ENCODE measurements at regions of chr7 and their contacts with region 1.

Region 1: GRCh38 chr7:135274495-135275268 is 41.0 kb downstream of the STRA8 start:
- DNase-seq: peak; percentile 56 to 80
- ATAC-seq: peak; percentile 79 to 94
- H3K4me3 ChIP-seq: no peak overlapping the region
- H3K27ac ChIP-seq: no peak overlapping the region
- H3K4me1 ChIP-seq: no peaks in the 10 kb centered on the region
- CTCF ChIP-seq: peak; percentile 83
- EP300 ChIP-seq: no peak
- POLR2A ChIP-seq: no peak
- RAD21 ChIP-seq: peak; percentile 86 to 89

Region 2: DNA sequence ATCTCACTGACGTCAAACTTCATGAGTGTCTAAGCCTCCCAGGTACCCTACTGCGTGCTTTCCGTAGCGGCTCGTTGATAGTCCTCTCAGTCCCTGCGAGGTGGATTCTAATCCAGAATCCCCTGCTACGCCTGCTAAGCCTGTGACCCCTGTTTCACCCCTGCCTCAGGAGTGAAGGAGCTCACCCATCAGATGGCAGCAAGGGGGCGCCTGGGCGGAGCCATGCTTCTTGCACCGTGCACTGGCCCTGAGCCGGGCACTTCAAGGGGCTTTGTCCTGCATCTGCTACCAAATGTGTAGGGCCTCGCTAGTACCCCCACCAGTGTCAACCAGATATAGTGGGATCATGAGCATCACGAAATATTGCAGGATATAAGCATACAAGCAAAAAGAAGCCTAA is 42.0 kb before region 1 on chr7:
- CTCF ChIA-PET with region 1: interaction called, 12 read pairs
- POLR2A ChIA-PET with region 1: no interaction called
- DNase-seq: peak in 1 of 2 experiments; percentile 42
- ATAC-seq: peak in 1 of 2 experiments; percentile 83; a peak in 3 of 6 replicates
- H3K4me3 ChIP-seq: no peak overlapping the region
- H3K27ac ChIP-seq: no peak overlapping the region
- H3K4me1 ChIP-seq: no peaks in the 10 kb centered on the region
- CTCF ChIP-seq: peak; percentile 40
- EP300 ChIP-seq: no peak
- POLR2A ChIP-seq: no peak
- RAD21 ChIP-seq: no peak

Region 3: GRCh38 chr7:135260930-135261721 is 13.6 kb before region 1 on chr7:
- CTCF ChIA-PET with region 1: interaction called, 69 read pairs
- POLR2A ChIA-PET with region 1: no interaction called
- DNase-seq: no peak
- ATAC-seq: no peak; a peak in 1 of 6 replicates
- H3K4me3 ChIP-seq: no peak overlapping the region
- H3K27ac ChIP-seq: no peak overlapping the region
- H3K4me1 ChIP-seq: peaks cover 12% of the 10 kb centered on the region; the same call in 1 of the 3 replicates
- CTCF ChIP-seq: no peak
- EP300 ChIP-seq: no peak
- POLR2A ChIP-seq: no peak
- RAD21 ChIP-seq: no peak

Region 4: GRCh38 chr7:135320277-135320676 is 45.6 kb after region 1 on chr7:
- CTCF ChIA-PET with region 1: interaction called, 35 read pairs
- POLR2A ChIA-PET with region 1: no interaction called
- DNase-seq: peak in 1 of 2 experiments; percentile 44
- ATAC-seq: peak; percentile 53 to 78; a peak in 4 of 6 replicates
- H3K4me3 ChIP-seq: no peak overlapping the region
- H3K27ac ChIP-seq: peak overlapping the region; percentile 40 to 44; a peak in 3 of 6 replicates
- H3K4me1 ChIP-seq: peaks cover 8% of the 10 kb centered on the region
- CTCF ChIP-seq: no peak
- EP300 ChIP-seq: no peak
- POLR2A ChIP-seq: no peak
- RAD21 ChIP-seq: no peak

Region 5: GRCh38 chr7:135348493-135348892 is 73.8 kb after region 1 on chr7:
- CTCF ChIA-PET with region 1: interaction called, 388 read pairs
- POLR2A ChIA-PET with region 1: no interaction called
- DNase-seq: no peak
- ATAC-seq: no peak
- H3K4me3 ChIP-seq: no peak overlapping the region
- H3K27ac ChIP-seq: no peak overlapping the region
- H3K4me1 ChIP-seq: no peaks in the 10 kb centered on the region
- CTCF ChIP-seq: no peak
- EP300 ChIP-seq: no peak
- POLR2A ChIP-seq: no peak
- RAD21 ChIP-seq: no peak

Region 6: GRCh38 chr7:135447783-135448182 is 173.1 kb after region 1 on chr7:
- CTCF ChIA-PET with region 1: no interaction called
- POLR2A ChIA-PET with region 1: no interaction called
- DNase-seq: no peak
- ATAC-seq: no peak
- H3K4me3 ChIP-seq: no peak overlapping the region
- H3K27ac ChIP-seq: no peak overlapping the region
- H3K4me1 ChIP-seq: peaks cover 4% of the 10 kb centered on the region; the same call in 1 of the 3 replicates
- CTCF ChIP-seq: no peak
- EP300 ChIP-seq: no peak
- POLR2A ChIP-seq: no peak
- RAD21 ChIP-seq: no peak

Region 7: DNA sequence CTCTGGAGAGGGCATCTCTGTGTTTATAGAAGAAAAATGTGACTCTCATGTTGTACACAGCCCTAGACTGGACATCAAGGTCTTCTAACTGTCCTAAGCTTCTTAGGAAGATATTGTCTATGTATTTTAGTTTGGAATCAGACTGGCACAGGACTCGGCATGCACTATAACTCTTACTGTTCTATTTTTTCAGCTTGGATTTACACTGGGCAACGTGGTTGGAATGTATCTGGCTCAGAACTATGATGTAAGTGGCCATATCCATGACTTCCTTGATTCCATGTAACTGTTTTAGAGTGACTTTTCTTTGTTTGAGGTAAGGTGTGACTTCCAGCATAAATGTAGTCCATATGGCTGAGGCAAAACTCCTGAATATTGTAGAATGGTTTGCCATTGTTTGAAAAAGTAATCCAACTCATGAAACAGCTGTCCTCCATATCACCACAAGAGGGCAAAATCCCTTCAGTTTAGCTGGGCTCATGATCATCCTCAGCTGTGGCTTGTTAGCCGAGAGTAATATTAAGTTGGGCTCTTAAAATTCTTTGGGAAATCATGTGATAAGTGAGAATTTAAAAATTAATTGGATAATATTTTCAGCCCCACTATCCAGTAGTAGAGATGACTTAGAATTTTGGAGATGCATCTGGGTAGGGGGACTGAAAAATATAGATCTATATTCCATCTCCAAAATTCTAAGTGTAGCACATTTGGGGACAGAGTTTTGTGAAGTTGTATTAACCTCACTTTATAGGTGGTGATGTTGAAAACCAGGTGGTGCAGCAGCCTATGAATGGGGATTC is 398.1 kb after region 1 on chr7:
- CTCF ChIA-PET with region 1: interaction called, 10 read pairs
- POLR2A ChIA-PET with region 1: no interaction called
- DNase-seq: peak; percentile 61 to 68
- ATAC-seq: peak; percentile 85 to 96
- H3K4me3 ChIP-seq: no peak overlapping the region
- H3K27ac ChIP-seq: no peak overlapping the region
- H3K4me1 ChIP-seq: peaks cover 3% of the 10 kb centered on the region; the same call in 2 of the 3 replicates
- CTCF ChIP-seq: peak; percentile 74
- EP300 ChIP-seq: no peak
- POLR2A ChIP-seq: no peak
- RAD21 ChIP-seq: peak; percentile 63 to 69